GM12878 (cell line): ENCODE measurements at regions of chr18 and their contacts with region 1.

Region 1: GRCh38 chr18:2958819-2959298 is 54.1 kb downstream of the LPIN2 start:
- DNase-seq: no peak
- ATAC-seq: peak; percentile 65
- H3K4me3 ChIP-seq: peak overlapping the region; percentile 20; the same call in 1 of the 2 replicates
- H3K27ac ChIP-seq: peak overlapping the region; percentile 93
- H3K4me1 ChIP-seq: peaks cover 70% of the 10 kb centered on the region
- H3K27me3 ChIP-seq: no peaks in the 10 kb centered on the region
- CTCF ChIP-seq: no peak
- EP300 ChIP-seq: 0 out of 4 replicates have a peak, but pooled peaks have one; percentile 6 to 11
- POLR2A ChIP-seq: no peak
- RAD21 ChIP-seq: no peak

Region 2: GRCh38 chr18:2932247-2933181 is 26.3 kb before region 1 on chr18:
- CTCF ChIA-PET with region 1: interaction called, 13 read pairs
- POLR2A ChIA-PET with region 1: no interaction called
- RAD21 ChIA-PET with region 1: interaction called, 10 read pairs
- SMC1A ChIA-PET with region 1: interaction called, 18 read pairs
- in situ Hi-C with region 1: no loop called
- intact Hi-C with region 1: no loop called
- DNase-seq: peak; percentile 23
- ATAC-seq: peak; percentile 76
- H3K4me3 ChIP-seq: no peak overlapping the region
- H3K27ac ChIP-seq: no peak overlapping the region
- H3K4me1 ChIP-seq: no peaks in the 10 kb centered on the region
- H3K27me3 ChIP-seq: no peaks in the 10 kb centered on the region
- CTCF ChIP-seq: peak; percentile 40 to 71 (median 59); a peak in 5 of 6 replicates
- EP300 ChIP-seq: no peak
- POLR2A ChIP-seq: no peak
- RAD21 ChIP-seq: peak; percentile 94

Region 3: GRCh38 chr18:2948038-2948437 is 10.8 kb before region 1 on chr18:
- CTCF ChIA-PET with region 1: interaction called, 11 read pairs
- POLR2A ChIA-PET with region 1: interaction called, 5 read pairs
- RAD21 ChIA-PET with region 1: interaction called, 3 read pairs
- SMC1A ChIA-PET with region 1: interaction called, 29 read pairs
- in situ Hi-C with region 1: no loop called
- intact Hi-C with region 1: no loop called
- DNase-seq: no peak
- ATAC-seq: no peak
- H3K4me3 ChIP-seq: no peak overlapping the region
- H3K27ac ChIP-seq: no peak overlapping the region
- H3K4me1 ChIP-seq: no peaks in the 10 kb centered on the region
- H3K27me3 ChIP-seq: no peaks in the 10 kb centered on the region
- CTCF ChIP-seq: no peak; a peak in 1 of 6 replicates
- EP300 ChIP-seq: no peak
- POLR2A ChIP-seq: no peak
- RAD21 ChIP-seq: no peak

Region 4: GRCh38 chr18:2978646-2979045 is 19.8 kb after region 1 on chr18:
- CTCF ChIA-PET with region 1: interaction called, 285 read pairs
- POLR2A ChIA-PET with region 1: interaction called, 177 read pairs
- RAD21 ChIA-PET with region 1: interaction called, 155 read pairs
- SMC1A ChIA-PET with region 1: interaction called, 187 read pairs
- in situ Hi-C with region 1: no loop called
- intact Hi-C with region 1: loop called (anchors 2 kb)
- DNase-seq: no peak
- ATAC-seq: peak; percentile 16
- H3K4me3 ChIP-seq: peak overlapping the region; percentile 41; the same call in 1 of the 2 replicates
- H3K27ac ChIP-seq: peak overlapping the region; percentile 70
- H3K4me1 ChIP-seq: peaks cover 41% of the 10 kb centered on the region
- H3K27me3 ChIP-seq: no peaks in the 10 kb centered on the region
- CTCF ChIP-seq: no peak
- EP300 ChIP-seq: no peak
- POLR2A ChIP-seq: no peak
- RAD21 ChIP-seq: no peak

Region 5: GRCh38 chr18:2994603-2995432 is 36.0 kb after region 1 on chr18:
- CTCF ChIA-PET with region 1: interaction called, 285 read pairs
- POLR2A ChIA-PET with region 1: no interaction called
- RAD21 ChIA-PET with region 1: interaction called, 13 read pairs
- SMC1A ChIA-PET with region 1: interaction called, 187 read pairs
- in situ Hi-C with region 1: no loop called
- intact Hi-C with region 1: no loop called
- DNase-seq: no peak
- ATAC-seq: peak; percentile 93
- H3K4me3 ChIP-seq: no peak overlapping the region
- H3K27ac ChIP-seq: peak overlapping the region; percentile 53; the same call in 1 of the 2 replicates
- H3K4me1 ChIP-seq: peaks cover 33% of the 10 kb centered on the region
- H3K27me3 ChIP-seq: no peaks in the 10 kb centered on the region
- CTCF ChIP-seq: peak; percentile 69 to 71 (median 70)
- EP300 ChIP-seq: no peak
- POLR2A ChIP-seq: no peak
- RAD21 ChIP-seq: peak; percentile 84

Region 6: DNA sequence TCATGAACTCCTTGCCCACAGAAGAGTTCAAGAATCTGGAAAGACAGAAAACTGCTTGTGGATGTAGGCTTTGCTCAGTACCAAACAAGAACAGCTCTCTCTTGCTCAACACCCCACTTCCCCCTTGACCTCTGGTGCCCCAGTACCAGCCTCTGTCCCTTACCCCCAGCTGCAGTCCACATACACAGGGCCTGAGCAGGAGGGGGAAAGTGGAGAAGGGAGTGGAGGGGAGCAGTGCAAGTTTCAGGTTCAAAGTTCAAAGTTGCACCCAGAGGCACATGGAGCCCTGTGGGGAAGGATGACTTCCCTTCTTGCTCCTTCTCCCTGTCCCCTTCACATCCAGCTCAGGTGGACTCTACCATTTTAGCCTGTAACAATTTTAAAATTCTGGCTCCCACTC is 115.2 kb after region 1 on chr18:
- CTCF ChIA-PET with region 1: no interaction called
- POLR2A ChIA-PET with region 1: no interaction called
- RAD21 ChIA-PET with region 1: no interaction called
- SMC1A ChIA-PET with region 1: no interaction called
- in situ Hi-C with region 1: no loop called
- intact Hi-C with region 1: no loop called
- DNase-seq: no peak
- ATAC-seq: peak; percentile 46
- H3K4me3 ChIP-seq: no peak overlapping the region
- H3K27ac ChIP-seq: no peak overlapping the region
- H3K4me1 ChIP-seq: no peaks in the 10 kb centered on the region
- H3K27me3 ChIP-seq: no peaks in the 10 kb centered on the region
- CTCF ChIP-seq: no peak
- EP300 ChIP-seq: no peak
- POLR2A ChIP-seq: no peak
- RAD21 ChIP-seq: no peak

Region 7: GRCh38 chr18:3104190-3105054 is 145.6 kb after region 1 on chr18:
- CTCF ChIA-PET with region 1: no interaction called
- POLR2A ChIA-PET with region 1: no interaction called
- RAD21 ChIA-PET with region 1: no interaction called
- SMC1A ChIA-PET with region 1: no interaction called
- in situ Hi-C with region 1: no loop called
- intact Hi-C with region 1: no loop called
- DNase-seq: no peak
- ATAC-seq: no peak
- H3K4me3 ChIP-seq: no peak overlapping the region
- H3K27ac ChIP-seq: no peak overlapping the region
- H3K4me1 ChIP-seq: no peaks in the 10 kb centered on the region
- H3K27me3 ChIP-seq: no peaks in the 10 kb centered on the region
- CTCF ChIP-seq: no peak
- EP300 ChIP-seq: no peak
- POLR2A ChIP-seq: no peak
- RAD21 ChIP-seq: no peak